AG04449 (cell line): ENCODE measurements at regions of chr1 and their contacts with region 1.

Region 1: DNA sequence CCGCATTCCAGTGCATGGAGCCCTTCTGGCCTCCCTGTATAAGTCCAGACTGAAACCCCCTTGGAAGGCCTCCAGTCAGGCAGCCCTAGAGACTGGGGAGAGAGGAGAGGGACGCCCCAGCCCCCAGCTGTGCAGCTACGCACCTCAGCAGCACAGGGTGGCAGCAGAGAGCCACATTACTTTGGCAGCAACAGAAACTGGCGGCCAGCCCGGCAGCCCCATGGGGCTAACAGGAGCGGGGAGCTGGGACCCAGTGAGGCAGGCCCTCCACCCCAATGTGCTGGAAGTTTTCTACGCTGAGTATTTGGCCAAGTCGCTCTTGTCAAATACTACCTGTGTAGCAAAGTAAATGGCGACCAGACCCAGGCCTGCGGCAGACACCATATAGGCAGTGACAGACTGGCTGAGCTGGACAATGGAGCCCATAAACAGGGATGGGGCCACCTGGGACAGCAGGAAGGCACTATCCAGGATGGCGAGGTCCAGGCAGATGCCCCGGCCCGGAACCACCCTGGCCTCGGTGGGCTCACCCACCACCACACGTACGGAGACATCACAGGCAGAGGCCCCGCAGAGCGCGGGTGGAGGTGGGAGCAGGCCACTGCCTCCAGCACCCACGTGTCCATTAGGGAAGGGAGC is 21.2 kb downstream of the SLC45A3 start:
- DNase-seq: no peak
- H3K4me3 ChIP-seq: no peak overlapping the region
- CTCF ChIP-seq: peak; percentile 93

Region 2: DNA sequence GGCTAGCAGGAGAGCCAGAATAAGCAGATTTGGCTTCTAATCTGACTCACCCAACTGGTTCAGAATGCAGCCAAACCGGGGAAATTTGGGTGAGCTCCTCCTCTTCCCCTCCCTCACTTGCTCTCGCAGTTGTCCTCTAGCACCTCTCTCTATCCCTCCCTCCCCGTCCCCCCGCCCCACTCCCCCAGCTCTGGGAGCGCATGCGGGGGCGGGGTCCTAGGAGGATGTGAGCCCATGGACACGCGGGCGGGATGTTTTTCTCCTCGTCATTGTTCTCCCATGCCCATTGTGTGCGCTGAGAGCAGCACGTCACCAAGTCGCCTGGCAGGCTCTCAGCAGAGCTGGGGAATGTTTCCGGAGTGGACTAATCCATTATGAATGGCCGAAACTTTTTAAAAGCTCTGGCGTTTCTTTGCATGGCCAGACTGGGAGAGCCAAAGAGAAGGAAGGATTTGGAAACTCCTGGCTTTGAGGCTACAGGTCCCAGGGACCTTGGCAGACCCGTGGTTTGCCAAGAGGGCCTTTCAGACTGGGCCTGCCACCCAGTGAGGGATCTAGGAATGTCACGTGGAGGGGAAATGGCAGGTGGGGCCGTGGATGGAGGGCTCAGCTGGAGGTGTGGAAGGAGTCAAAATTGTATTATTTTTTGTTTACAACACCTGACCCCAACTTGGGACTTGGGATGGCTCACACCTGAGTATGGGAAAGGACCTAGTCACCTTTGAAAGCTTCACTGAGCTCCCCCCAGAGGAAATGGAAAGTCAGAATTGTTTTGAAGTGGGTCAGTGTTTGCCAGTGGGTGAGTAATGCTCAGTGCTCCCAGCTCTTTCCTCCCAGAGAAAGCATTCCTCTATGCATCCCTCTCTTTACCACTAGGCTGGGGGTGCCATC is 115.4 kb before region 1 on chr1:
- CTCF ChIA-PET with region 1: interaction called, 14 read pairs
- POLR2A ChIA-PET with region 1: no interaction called
- DNase-seq: peak; percentile 21
- H3K4me3 ChIP-seq: peak overlapping the region; percentile 41
- CTCF ChIP-seq: no peak

Region 3: GRCh38 chr1:205619376-205619775 is 39.7 kb before region 1 on chr1:
- CTCF ChIA-PET with region 1: interaction called, 23 read pairs
- POLR2A ChIA-PET with region 1: no interaction called
- DNase-seq: no peak
- H3K4me3 ChIP-seq: no peak overlapping the region
- CTCF ChIP-seq: no peak

Region 4: DNA sequence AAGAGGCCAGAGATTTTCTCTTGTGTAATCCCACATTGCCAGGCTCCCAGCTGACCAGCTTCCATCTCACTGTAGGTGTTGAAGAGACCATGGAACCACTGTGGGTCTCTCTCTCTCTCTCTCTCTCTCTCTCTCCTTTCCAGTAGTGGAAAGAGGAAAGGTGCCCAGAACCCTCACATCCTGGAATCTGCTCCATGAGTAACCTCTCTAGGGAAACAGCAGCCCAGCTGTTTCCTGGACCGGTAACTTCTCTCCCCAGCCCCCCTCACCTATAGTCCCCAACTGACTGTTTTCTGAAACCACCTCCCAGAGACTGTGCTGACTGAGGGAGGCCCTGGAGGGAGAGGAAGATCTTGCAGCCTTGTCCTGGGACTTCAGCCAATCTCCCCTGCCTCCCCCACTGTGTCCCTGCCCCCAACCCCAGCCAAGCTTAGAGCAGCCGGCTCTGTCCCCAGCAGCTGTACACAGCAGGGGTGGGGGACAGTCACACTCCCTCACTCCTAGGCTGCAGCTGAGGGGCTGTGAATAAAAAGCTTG is 41.9 kb after region 1 on chr1:
- CTCF ChIA-PET with region 1: interaction called, 24 read pairs
- POLR2A ChIA-PET with region 1: no interaction called
- DNase-seq: no peak
- H3K4me3 ChIP-seq: no peak overlapping the region
- CTCF ChIP-seq: no peak

Region 5: GRCh38 chr1:205769641-205770365 is 110.7 kb after region 1 on chr1:
- CTCF ChIA-PET with region 1: interaction called, 11 read pairs
- POLR2A ChIA-PET with region 1: no interaction called
- DNase-seq: no peak
- H3K4me3 ChIP-seq: no peak overlapping the region
- CTCF ChIP-seq: no peak

Region 6: GRCh38 chr1:205967555-205968335 is 308.7 kb after region 1 on chr1:
- CTCF ChIA-PET with region 1: interaction called, 15 read pairs
- POLR2A ChIA-PET with region 1: no interaction called
- DNase-seq: no peak
- H3K4me3 ChIP-seq: no peak overlapping the region
- CTCF ChIP-seq: no peak